CD8-positive, alpha-beta T cell (primary cell): ENCODE measurements at regions of chr6 and their contacts with region 1.

Region 1: GRCh38 chr6:57089687-57090460 is at the start of gene ZNF451:
- DNase-seq: peak; percentile 92 to 98 (median 96)
- ATAC-seq: peak; percentile 91
- H3K4me3 ChIP-seq: peak within 1 kb of the TSS; percentile 59 to 82
- H3K4me3 Mint-ChIP-seq: peak within 1 kb of the TSS; percentile 90
- H3K27ac ChIP-seq: peak within 1 kb of the TSS; percentile 56 to 74
- H3K27ac Mint-ChIP-seq: peak within 1 kb of the TSS; percentile 93
- H3K4me1 ChIP-seq: peaks cover 36% of the 10 kb centered on the region
- H3K4me1 Mint-ChIP-seq: peaks cover 36% of the 10 kb centered on the region
- H3K27me3 ChIP-seq: no peaks in the 10 kb centered on the region
- H3K27me3 Mint-ChIP-seq: no peaks in the 10 kb centered on the region
- CTCF ChIP-seq: no peak
- total RNA-seq, gene ZNF451: 132 to 136 TPM

Region 2: DNA sequence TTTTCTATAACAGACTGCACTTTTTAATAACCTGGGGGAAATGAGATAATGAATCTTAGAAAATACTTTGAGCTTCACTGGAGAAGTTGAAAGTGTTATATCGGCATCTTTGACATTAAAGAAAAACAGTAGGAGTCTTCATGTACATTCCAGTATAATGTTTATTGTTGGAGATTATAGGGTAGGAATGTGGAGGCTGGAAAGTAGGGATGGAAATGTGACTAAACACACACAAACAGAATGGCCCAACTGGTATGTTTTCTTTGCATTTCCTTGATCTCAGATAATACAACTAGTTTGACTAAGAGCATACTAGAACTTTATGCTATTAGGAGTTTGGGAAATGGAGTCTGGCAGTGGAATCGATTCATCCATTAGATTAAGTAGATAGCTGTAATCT is 72.1 kb after region 1 on chr6:
- CTCF ChIA-PET with region 1: no interaction called
- POLR2A ChIA-PET with region 1: no interaction called
- intact Hi-C with region 1: no loop called
- DNase-seq: no peak
- ATAC-seq: no peak
- H3K4me3 ChIP-seq: no peak overlapping the region
- H3K4me3 Mint-ChIP-seq: no peak overlapping the region
- H3K27ac ChIP-seq: no peak overlapping the region
- H3K27ac Mint-ChIP-seq: no peak overlapping the region
- H3K4me1 ChIP-seq: no peaks in the 10 kb centered on the region
- H3K4me1 Mint-ChIP-seq: no peaks in the 10 kb centered on the region
- H3K27me3 ChIP-seq: no peaks in the 10 kb centered on the region
- H3K27me3 Mint-ChIP-seq: no peaks in the 10 kb centered on the region
- CTCF ChIP-seq: no peak

Region 3: GRCh38 chr6:57172136-57173055 is 82.5 kb after region 1 on chr6 and contains the start of gene BAG2:
- CTCF ChIA-PET with region 1: no interaction called
- POLR2A ChIA-PET with region 1: interaction called, 3 read pairs
- intact Hi-C with region 1: loop called (anchors 1 kb)
- DNase-seq: peak; percentile 79 to 91 (median 89)
- ATAC-seq: peak; percentile 85
- H3K4me3 ChIP-seq: peak within 1 kb of the TSS; percentile 62 to 77
- H3K4me3 Mint-ChIP-seq: peak within 1 kb of the TSS; percentile 87
- H3K27ac ChIP-seq: peak within 1 kb of the TSS; percentile 62 to 83
- H3K27ac Mint-ChIP-seq: peak within 1 kb of the TSS; percentile 92
- H3K4me1 ChIP-seq: peaks cover 23% of the 10 kb centered on the region
- H3K4me1 Mint-ChIP-seq: peaks cover 47% of the 10 kb centered on the region
- H3K27me3 ChIP-seq: no peaks in the 10 kb centered on the region
- H3K27me3 Mint-ChIP-seq: no peaks in the 10 kb centered on the region
- CTCF ChIP-seq: no peak
- total RNA-seq, gene BAG2: 4.6 to 5.0 TPM

Region 4: DNA sequence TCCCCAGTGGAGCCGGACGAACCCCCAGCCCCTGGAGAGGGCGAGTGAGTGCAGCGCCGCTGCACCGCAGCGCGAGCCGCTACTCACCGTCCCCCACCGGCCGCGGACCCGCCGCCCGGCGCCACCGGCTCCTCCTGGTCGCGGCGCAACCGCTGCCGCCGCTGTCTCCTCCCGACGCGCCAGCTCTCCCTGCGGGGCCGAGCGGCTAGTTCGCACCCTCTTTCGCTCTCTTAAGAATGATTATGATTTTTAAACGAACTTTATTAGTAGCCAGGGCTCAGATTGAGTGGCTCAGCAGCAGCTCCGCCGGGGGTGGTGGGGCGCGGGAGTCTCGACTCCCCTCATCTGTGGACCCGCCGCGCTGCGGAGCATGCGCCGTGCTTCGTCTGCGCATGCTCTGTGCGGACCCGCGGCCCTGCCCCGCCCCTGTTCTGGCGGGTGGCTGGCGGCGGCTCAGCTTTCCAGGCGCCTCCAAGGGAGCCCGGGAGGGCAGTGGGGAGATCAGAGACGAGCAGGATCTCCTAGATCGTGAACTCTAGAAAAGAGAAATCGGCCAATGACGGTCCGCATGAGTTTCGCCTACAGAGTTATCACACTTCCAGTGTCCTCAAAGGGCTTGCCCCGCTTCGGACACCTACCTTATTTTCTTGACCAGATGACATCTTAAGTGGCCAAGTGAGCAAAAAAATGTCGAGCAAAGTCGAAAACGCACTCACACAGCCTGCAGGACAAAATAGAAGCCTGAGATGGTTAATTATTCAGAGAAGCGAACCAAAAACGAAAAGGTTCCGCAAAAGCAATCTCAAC is 132.3 kb after region 1 on chr6 and contains the start of gene RAB23:
- CTCF ChIA-PET with region 1: no interaction called
- POLR2A ChIA-PET with region 1: no interaction called
- intact Hi-C with region 1: loop called (anchors 1 to 2 kb)
- DNase-seq: peak; percentile 66 to 92 (median 81)
- ATAC-seq: peak; percentile 90
- H3K4me3 ChIP-seq: peak within 1 kb of the TSS; percentile 88 to 94
- H3K4me3 Mint-ChIP-seq: peak within 1 kb of the TSS; percentile 97
- H3K27ac ChIP-seq: peak within 1 kb of the TSS in 1 of 2 experiments; percentile 35
- H3K27ac Mint-ChIP-seq: peak within 1 kb of the TSS; percentile 72
- H3K4me1 ChIP-seq: peaks cover 4% of the 10 kb centered on the region
- H3K4me1 Mint-ChIP-seq: peaks cover 11% of the 10 kb centered on the region
- H3K27me3 ChIP-seq: peaks cover 5 to 9% of the 10 kb centered on the region in 2 experiments
- H3K27me3 Mint-ChIP-seq: peaks cover 20% of the 10 kb centered on the region
- CTCF ChIP-seq: no peak
- total RNA-seq, gene RAB23: 0.08 TPM